GM23248 (cell line): ENCODE measurements at regions of chr11 and their contacts with region 1.

Region 1: DNA sequence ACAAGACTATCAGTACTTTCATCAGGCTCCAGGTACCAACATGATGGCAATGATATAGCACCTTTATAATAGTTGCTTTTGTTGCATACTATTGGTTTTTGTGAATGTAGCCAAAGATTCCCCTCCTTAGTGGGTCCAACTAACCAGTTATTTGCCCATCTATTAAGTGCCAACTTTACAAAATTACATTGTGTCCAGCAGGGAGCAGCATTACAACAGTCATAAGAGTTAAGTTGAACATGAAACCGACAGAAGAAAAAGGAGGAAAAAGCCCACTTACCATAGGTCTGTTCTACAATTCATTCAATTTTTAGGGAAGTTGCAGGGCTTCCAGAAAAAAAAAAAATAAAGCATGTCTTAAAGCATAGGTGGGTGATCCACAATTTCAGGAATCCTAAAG is 21.6 kb downstream of the IMMP1L start:
- DNase-seq: peak; percentile 66
- H3K4me3 ChIP-seq: no peak overlapping the region
- H3K27ac ChIP-seq: no peak overlapping the region
- H3K4me1 ChIP-seq: no peaks in the 10 kb centered on the region; the same call in 1 of the 2 replicates
- H3K27me3 ChIP-seq: no peaks in the 10 kb centered on the region

Region 2: DNA sequence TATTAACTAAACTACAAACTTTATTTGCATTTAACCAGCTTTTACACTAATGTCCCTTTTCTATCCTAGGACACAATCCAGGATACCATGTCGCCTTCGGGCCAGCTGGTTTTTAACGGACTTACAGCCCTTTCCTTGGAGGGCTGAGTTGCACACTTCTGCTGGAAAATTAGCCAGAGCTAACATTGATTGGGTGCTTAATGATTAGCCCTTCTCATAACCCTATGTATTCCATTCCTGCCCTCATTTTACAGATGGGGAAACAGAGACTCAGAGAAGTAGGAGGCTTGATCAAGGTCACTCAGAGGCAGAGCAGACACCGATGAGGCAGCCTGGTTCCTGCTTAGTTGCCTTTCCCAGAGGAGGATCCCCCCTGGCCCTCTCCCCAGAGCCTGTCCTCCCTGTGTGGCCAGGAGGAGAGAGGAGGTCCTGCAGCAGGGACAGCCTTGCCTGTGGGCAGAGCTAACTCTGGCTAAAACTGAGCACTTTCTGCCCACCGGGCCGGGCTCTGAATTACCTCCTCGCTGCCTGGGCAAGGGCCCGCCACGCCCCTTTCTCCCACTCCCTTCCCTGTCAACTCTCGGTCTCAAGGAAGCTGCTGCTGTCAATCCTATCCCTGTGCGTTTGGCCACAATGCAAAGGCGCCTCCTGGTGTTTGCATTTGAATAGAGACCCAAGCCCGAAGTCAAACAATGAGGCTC is 382.9 kb after region 1 on chr11:
- in situ Hi-C with region 1: loop called (anchors 25 kb)
- DNase-seq: peak; percentile 50
- H3K4me3 ChIP-seq: no peak overlapping the region
- H3K27ac ChIP-seq: no peak overlapping the region
- H3K4me1 ChIP-seq: no peaks in the 10 kb centered on the region
- H3K27me3 ChIP-seq: peaks cover 49% of the 10 kb centered on the region

Region 3: DNA sequence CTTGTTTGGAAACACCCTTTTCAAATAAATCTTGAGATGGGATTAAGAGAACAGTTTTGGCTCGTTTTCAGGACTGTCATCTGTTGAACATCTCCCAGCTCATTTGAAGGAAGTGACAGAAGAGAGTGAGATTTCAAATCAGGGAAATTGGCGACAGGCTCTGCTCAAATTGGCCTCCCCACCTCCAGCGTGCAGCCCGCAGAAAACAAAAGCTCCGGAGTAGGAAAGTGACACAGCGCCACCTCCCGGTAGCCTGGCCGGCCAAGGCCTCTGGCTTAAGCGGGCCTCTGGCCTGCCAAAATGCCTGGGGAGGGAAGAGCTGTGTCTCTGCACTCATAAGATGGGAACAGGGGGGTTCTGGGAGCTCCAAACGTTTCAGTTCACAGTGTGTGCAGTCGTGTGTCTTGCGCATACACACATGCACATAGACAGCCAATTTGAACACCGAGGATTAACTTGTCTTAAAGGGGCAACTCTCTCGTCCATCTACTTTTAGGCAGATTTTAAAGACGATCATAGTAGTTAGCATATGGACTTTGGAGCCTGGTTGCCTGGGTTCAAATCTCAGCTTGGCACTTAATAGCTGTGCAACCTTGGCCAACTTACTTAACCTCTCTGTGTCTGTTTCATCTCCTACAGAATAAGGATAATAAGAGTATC is 470.4 kb after region 1 on chr11:
- in situ Hi-C with region 1: loop called (anchors 25 kb)
- DNase-seq: peak; percentile 79
- H3K4me3 ChIP-seq: no peak overlapping the region
- H3K27ac ChIP-seq: no peak overlapping the region
- H3K4me1 ChIP-seq: 0 out of 2 replicates have a peak, but pooled peaks cover 14% of the 10 kb centered on the region
- H3K27me3 ChIP-seq: no peaks in the 10 kb centered on the region